Activated CD4-positive, alpha-beta memory T cell treated with anti-CD3 and anti-CD28 coated beads for 36 hours (primary cell): ENCODE measurements at regions of chr6 and their contacts with region 1.

Region 1: DNA sequence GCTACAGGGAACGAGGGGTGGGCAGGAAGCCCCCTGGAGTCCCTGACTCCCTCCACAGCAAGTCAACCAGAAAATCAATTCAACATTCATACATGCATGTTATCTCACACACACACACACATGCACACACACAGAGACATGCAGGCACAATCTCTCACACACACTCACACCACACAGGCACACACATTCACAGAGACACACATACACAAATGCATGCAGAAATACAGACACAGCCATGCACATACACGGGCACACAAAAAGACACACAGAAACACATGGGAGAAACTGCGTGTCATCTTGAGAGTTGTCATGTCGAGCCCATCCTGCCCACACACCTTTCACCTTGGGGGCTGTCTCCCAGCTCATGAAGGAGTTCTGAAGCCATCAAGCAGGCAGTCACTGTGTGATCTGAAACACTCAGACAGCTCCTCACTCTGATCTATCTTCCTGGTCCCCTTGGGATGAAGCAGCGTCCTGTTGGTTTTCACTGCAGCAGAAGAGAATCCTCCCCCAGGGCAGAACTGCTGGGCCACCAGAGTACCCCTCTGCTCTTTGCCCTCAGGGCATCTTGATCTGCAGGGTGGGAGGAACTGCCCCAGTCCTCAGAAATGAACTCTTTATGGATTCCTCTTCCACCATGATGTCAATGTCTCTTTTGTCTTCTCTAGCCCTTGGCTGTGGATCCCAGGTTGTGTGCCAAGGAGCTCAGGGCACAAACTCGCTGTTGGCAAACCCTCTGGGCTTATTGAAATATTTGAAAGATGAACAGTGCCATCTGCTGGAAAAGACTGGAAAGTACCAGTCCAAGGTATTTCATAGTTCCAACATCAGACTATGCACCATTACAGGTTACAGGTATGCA is 8.8 kb downstream of the RAET1L start:
- DNase-seq: peak; percentile 44
- H3K4me3 Mint-ChIP-seq: no peak overlapping the region
- H3K27ac Mint-ChIP-seq: peak overlapping the region; percentile 15
- H3K4me1 Mint-ChIP-seq: peaks cover 24% of the 10 kb centered on the region
- H3K27me3 Mint-ChIP-seq: peaks cover 65% of the 10 kb centered on the region

Region 2: DNA sequence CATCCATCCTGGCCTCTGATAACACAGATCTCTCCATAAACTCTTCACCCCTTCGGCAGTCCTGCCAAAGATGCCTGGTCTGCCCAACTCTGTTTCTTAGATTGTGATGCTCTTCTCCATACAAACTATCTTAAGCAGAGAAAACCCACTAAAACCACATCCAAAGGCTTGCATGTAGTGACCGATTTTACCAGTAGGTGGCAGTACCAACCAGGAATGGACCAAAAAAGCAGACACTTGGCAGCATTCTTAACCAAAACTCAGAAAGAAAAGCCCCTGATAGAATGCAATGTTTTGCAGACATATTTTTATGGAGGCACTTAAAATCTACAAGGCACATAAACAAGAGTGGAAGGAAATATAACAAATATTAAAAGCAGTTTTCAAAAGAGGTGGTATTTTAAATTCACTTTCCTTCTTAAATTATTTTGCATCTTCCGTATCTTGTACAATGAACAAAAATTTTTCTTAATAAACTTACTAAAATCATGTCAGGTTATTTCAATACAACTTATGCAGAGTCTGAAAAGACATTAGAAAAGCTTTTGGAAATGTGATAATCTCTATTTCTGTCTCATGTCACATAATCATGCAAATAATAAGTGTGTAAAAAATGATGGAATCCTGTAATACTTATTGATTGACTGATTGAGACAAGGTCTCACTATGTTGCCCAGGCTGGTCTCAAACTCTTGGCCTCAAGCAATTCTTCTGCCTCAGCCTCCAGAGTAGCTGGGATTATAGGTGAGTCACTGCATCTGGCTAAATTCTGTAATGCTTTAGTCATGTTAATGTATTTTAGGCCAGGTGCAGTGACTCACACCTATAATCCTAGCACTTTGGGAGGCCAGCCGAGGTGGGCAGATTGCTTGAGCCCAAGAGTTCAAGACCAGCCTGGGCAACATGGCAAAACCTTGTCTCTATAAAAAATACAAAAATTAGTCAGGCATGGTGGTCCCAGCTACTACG is 181.8 kb before region 1 on chr6:
- CTCF ChIA-PET with region 1: interaction called, 24 read pairs
- POLR2A ChIA-PET with region 1: no interaction called
- intact Hi-C with region 1: no loop called
- DNase-seq: peak; percentile 77
- H3K4me3 Mint-ChIP-seq: no peak overlapping the region
- H3K27ac Mint-ChIP-seq: no peak overlapping the region
- H3K4me1 Mint-ChIP-seq: peaks cover 2% of the 10 kb centered on the region
- H3K27me3 Mint-ChIP-seq: no peaks in the 10 kb centered on the region

Region 3: DNA sequence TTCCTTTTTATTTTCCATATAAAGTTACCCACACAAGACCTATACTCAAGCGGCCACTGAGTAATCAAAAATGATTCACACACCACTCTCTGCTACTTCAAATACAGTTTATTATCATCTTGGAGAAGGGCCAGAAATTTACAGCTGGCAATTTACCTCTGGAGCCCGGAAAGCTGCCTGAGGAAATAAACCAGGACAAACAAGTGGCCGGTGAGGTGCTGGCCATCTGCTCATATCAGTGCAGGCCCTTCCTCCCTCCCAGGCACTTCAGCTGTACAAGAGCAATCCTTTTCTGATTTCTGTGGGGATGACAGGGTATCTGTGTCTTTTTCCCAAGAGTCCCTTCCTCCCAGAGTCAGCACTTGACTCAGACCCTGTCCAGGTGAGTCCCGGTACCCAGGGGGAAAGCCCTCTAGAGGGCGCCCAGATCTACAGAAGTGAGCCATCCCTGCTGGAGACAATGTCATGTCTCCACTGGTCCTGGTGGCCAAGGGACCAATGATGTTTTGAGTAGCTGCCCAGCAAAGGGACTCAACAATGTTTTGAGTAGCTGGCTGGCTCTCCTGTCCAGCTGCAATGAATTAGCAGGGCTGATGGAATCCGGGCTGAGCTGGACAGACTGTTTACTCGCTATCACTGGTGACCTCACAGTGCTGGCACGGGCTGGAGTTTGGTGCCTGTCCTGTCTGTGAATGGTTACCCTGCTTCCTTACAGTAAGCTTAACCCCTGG is 176.0 kb before region 1 on chr6:
- CTCF ChIA-PET with region 1: interaction called, 24 read pairs
- POLR2A ChIA-PET with region 1: no interaction called
- intact Hi-C with region 1: loop called (anchors 10 kb)
- DNase-seq: peak; percentile 71
- H3K4me3 Mint-ChIP-seq: no peak overlapping the region
- H3K27ac Mint-ChIP-seq: no peak overlapping the region
- H3K4me1 Mint-ChIP-seq: no peaks in the 10 kb centered on the region
- H3K27me3 Mint-ChIP-seq: no peaks in the 10 kb centered on the region

Region 4: GRCh38 chr6:149934249-149935156 is 82.1 kb before region 1 on chr6:
- CTCF ChIA-PET with region 1: interaction called, 28 read pairs
- POLR2A ChIA-PET with region 1: no interaction called
- intact Hi-C with region 1: loop called (anchors 1 kb)
- DNase-seq: peak; percentile 76
- H3K4me3 Mint-ChIP-seq: no peak overlapping the region
- H3K27ac Mint-ChIP-seq: peak overlapping the region; percentile 49
- H3K4me1 Mint-ChIP-seq: peaks cover 22% of the 10 kb centered on the region
- H3K27me3 Mint-ChIP-seq: peaks cover 82% of the 10 kb centered on the region

Region 5: DNA sequence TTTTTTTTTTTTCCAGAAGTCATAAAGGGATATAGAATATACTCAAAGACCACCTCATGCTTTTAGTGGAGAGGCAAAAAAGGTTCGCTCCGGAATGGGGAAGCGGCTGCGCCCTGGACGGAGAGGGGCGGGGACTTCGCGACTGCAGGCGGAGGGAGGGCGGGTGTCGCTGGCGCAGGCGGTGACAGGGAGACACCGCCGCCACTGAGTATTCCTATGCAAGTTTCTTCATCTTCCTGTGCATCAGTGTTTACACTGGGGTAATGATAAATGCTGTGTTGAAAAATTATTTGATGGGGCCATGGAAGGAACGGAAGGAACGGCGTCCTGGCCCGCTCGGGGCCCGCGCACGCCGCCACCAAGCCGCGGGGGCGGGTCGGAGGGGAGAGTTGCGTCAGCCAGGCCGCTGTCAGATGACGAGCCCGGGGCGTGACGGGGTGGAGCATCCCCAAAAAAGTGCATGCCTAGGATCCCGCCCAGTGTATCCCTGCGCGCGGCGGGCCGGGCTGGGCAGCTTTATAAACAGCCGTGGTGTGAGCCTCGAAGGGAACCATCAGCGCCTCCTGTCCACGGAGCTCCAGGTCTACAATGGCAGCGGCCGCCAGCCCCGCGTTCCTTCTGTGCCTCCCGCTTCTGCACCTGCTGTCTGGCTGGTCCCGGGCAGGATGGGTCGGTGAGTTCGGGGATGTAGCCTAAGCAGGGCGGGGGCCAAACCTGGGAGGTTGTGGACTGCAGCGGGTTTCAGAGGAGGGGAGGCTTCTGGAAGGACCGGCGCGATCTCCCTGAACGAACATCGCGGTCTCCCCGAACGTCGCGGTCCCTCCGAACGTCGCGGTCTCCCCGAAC is 52.9 kb before region 1 on chr6 and contains the start of gene ULBP1:
- CTCF ChIA-PET with region 1: interaction called, 7 read pairs
- POLR2A ChIA-PET with region 1: no interaction called
- intact Hi-C with region 1: loop called (anchors 2 kb)
- DNase-seq: peak; percentile 91
- H3K4me3 Mint-ChIP-seq: peak within 1 kb of the TSS; percentile 86
- H3K27ac Mint-ChIP-seq: peak within 1 kb of the TSS; percentile 70
- H3K4me1 Mint-ChIP-seq: peaks cover 29% of the 10 kb centered on the region
- H3K27me3 Mint-ChIP-seq: peaks cover 75% of the 10 kb centered on the region
- total RNA-seq, gene ULBP1: 1.8 to 2.2 TPM